HepG2 (cell line): ENCODE measurements at regions of chr16 and their contacts with region 1.

Region 1: GRCh38 chr16:13453938-13454553 is 465.9 kb upstream of the ERCC4 start:
- DNase-seq: peak; percentile 38
- ATAC-seq: peak; percentile 65
- H3K4me3 ChIP-seq: no peak overlapping the region
- H3K27ac ChIP-seq: no peak overlapping the region
- H3K4me1 ChIP-seq: no peaks in the 10 kb centered on the region
- H3K27me3 ChIP-seq: no peaks in the 10 kb centered on the region
- CTCF ChIP-seq: peak; percentile 83
- EP300 ChIP-seq: no peak
- POLR2A ChIP-seq: no peak
- RAD21 ChIP-seq: no peak; the same call in 1 of the 2 replicates

Region 2: DNA sequence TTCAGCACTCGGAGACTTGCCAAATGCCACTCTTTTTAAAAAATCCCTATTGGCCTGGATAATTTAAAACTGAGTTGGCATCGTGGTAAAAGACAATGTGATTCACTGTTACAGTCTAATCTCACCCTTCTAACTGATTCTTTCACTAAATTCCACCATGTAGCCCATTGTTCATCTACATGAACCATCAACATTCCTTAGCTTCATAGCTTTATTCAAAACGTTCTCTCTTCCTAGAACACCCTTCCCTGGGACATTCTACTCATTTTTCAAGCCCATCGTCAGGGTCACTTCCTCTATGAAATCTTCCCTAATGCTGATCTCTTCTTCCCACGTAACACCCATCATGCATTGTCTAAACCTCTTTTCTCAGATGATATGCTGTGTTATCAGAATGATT is 568.3 kb before region 1 on chr16:
- CTCF ChIA-PET with region 1: no interaction called
- POLR2A ChIA-PET with region 1: no interaction called
- in situ Hi-C with region 1: loop called (anchors 5 kb)
- intact Hi-C with region 1: no loop called
- DNase-seq: no peak
- ATAC-seq: no peak
- H3K4me3 ChIP-seq: no peak overlapping the region
- H3K27ac ChIP-seq: no peak overlapping the region
- H3K4me1 ChIP-seq: no peaks in the 10 kb centered on the region
- H3K27me3 ChIP-seq: no peaks in the 10 kb centered on the region
- CTCF ChIP-seq: no peak
- EP300 ChIP-seq: no peak
- POLR2A ChIP-seq: no peak
- RAD21 ChIP-seq: no peak

Region 3: GRCh38 chr16:13186813-13187212 is 267.2 kb before region 1 on chr16:
- CTCF ChIA-PET with region 1: no interaction called
- POLR2A ChIA-PET with region 1: no interaction called
- in situ Hi-C with region 1: no loop called
- intact Hi-C with region 1: loop called (anchors 5 kb)
- DNase-seq: peak; percentile 31
- ATAC-seq: peak; percentile 83
- H3K4me3 ChIP-seq: no peak overlapping the region
- H3K27ac ChIP-seq: no peak overlapping the region
- H3K4me1 ChIP-seq: no peaks in the 10 kb centered on the region
- H3K27me3 ChIP-seq: no peaks in the 10 kb centered on the region
- CTCF ChIP-seq: peak; percentile 62
- EP300 ChIP-seq: no peak
- POLR2A ChIP-seq: no peak
- RAD21 ChIP-seq: peak; percentile 61

Region 4: DNA sequence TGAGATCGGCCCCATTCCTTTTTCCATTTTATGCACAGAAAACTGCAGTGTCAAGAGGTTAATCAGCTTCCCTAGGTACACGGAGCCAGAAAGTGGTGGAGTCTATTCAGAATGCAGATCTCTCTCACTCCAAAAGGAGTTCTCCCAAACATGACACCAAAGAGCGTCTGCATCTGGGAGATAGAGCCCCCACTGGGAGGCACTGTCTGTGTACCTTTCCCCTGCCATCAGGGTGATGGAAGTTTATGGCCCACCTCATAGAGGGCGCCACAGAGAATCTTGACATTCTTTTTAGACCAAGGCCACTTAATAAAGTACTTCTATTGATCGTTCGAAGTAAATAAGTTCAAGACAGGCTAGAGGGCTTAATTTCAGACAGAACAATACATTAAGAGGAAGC is 27.8 kb before region 1 on chr16:
- CTCF ChIA-PET with region 1: interaction called, 13 read pairs
- POLR2A ChIA-PET with region 1: no interaction called
- in situ Hi-C with region 1: no loop called
- intact Hi-C with region 1: no loop called
- DNase-seq: peak; percentile 60
- ATAC-seq: peak; percentile 97
- H3K4me3 ChIP-seq: no peak overlapping the region
- H3K27ac ChIP-seq: no peak overlapping the region
- H3K4me1 ChIP-seq: no peaks in the 10 kb centered on the region
- H3K27me3 ChIP-seq: no peaks in the 10 kb centered on the region
- CTCF ChIP-seq: peak; percentile 70
- EP300 ChIP-seq: no peak
- POLR2A ChIP-seq: no peak
- RAD21 ChIP-seq: peak; percentile 85